Caco-2 (cell line): ENCODE measurements at regions of chr15 and their contacts with region 1.

Region 1: GRCh38 chr15:43133430-43134156 is at the start of gene TMEM62:
- DNase-seq: peak; percentile 87 to 89
- H3K4me3 ChIP-seq: peak within 1 kb of the TSS; percentile 73
- H3K4me3 Mint-ChIP-seq: peak within 1 kb of the TSS; percentile 94
- H3K27ac Mint-ChIP-seq: peak within 1 kb of the TSS; percentile 95
- H3K4me1 ChIP-seq: no peaks in the 10 kb centered on the region
- H3K4me1 Mint-ChIP-seq: peaks cover 16% of the 10 kb centered on the region
- H3K27me3 ChIP-seq: no peaks in the 10 kb centered on the region; the same call in 1 of the 2 replicates
- H3K27me3 Mint-ChIP-seq: no peaks in the 10 kb centered on the region
- CTCF ChIP-seq: peak in 1 of 2 experiments; percentile 2
- total RNA-seq, gene TMEM62: 22.0 and 23.7 TPM in 2 replicates

Region 2: DNA sequence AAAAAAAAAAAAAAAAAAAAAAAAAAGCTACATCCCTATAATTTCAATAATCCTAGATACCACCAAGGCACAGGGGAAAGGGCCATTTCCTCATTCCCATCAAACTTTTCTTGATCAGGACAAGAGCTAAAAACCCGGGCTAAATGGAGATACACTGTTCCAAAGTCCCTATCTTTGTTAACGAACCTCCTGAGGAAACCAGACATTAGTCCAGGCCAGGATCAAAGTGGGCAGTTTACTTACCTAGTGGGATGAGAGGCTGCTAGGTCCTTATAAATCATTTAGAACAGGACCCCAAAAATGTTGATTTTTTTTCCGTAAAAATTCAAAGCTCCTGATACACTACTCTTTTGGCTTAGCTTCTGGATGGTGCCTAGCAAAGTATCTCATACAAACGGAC is 63.3 kb before region 1 on chr15:
- CTCF ChIA-PET with region 1: no interaction called
- POLR2A ChIA-PET with region 1: interaction called, 11 read pairs
- intact Hi-C with region 1: no loop called
- DNase-seq: no peak
- H3K4me3 ChIP-seq: no peak overlapping the region
- H3K4me3 Mint-ChIP-seq: no peak overlapping the region
- H3K27ac Mint-ChIP-seq: no peak overlapping the region
- H3K4me1 ChIP-seq: 0 out of 2 replicates have a peak, but pooled peaks cover under 1% of the 10 kb centered on the region
- H3K4me1 Mint-ChIP-seq: peaks cover 9% of the 10 kb centered on the region
- H3K27me3 ChIP-seq: no peaks in the 10 kb centered on the region
- H3K27me3 Mint-ChIP-seq: no peaks in the 10 kb centered on the region
- CTCF ChIP-seq: no peak

Region 3: DNA sequence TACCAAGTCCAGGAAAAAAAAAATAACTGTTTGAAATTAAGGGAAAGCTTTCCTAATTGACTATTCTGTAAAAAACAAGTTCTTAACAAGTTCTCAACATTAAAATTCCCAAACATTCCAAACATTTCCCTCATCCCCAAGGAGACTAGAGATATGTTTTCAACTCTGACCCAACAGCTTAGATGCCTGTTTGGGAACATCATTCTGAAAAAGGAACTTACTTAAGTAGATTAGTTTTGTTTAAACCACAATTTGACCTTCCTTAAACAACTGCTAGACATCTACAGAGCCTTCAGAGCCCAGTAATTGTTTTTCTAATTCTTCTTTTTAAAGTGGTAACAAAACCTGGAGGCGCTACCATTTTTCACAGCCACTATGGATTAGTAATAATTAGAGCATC is 40.6 kb before region 1 on chr15:
- CTCF ChIA-PET with region 1: no interaction called
- POLR2A ChIA-PET with region 1: no interaction called
- intact Hi-C with region 1: no loop called
- DNase-seq: no peak
- H3K4me3 ChIP-seq: no peak overlapping the region
- H3K4me3 Mint-ChIP-seq: no peak overlapping the region
- H3K27ac Mint-ChIP-seq: no peak overlapping the region
- H3K4me1 ChIP-seq: peaks cover 21% of the 10 kb centered on the region
- H3K4me1 Mint-ChIP-seq: peaks cover 19% of the 10 kb centered on the region
- H3K27me3 ChIP-seq: no peaks in the 10 kb centered on the region
- H3K27me3 Mint-ChIP-seq: no peaks in the 10 kb centered on the region
- CTCF ChIP-seq: no peak

Region 4: DNA sequence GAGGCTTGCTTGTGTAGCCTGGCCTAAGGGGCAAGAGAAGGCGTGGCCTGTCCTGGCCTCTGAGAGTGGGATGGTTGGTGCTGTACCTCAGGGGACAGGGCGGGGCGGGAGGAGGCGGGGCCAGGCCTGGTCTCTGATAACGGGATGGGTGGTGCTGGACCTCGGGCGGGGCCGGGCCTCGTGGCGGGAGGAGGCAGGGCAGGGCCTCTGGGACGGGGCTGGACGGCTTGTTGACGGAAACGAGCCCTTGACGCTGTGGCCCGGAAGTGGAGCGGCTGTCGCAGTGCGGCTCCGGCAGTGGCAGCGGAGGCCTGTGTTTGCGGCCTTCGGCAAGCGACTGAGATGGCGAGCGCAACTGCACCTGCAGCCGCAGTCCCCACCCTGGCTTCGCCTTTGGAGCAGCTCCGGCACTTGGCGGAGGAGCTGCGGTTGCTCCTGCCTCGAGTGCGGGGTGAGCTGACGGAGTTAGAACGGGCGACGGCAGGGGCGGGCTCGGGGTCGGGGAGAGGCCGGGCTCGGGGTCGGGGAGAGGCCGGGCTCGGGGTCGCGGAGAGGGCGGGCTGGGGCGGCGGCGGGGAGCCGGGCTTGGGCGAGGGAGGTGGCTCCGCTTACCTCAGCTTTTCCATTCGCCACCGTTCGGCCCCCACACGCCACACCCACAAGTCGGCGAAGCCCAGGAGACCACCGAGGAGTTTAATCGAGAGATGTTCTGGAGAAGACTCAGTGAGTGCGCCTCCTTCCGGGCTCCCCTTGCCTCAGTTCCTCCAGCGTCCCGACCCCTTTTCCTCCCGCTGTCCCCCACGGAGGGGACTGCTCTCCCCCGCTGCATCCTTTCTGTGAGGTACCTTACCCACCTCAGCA is 51.8 kb after region 1 on chr15 and contains the start of gene CCNDBP1:
- CTCF ChIA-PET with region 1: no interaction called
- POLR2A ChIA-PET with region 1: no interaction called
- intact Hi-C with region 1: loop called (anchors 2 kb)
- DNase-seq: peak; percentile 96 to 97
- H3K4me3 ChIP-seq: peak within 1 kb of the TSS; percentile 82
- H3K4me3 Mint-ChIP-seq: peak within 1 kb of the TSS; percentile 93
- H3K27ac Mint-ChIP-seq: peak within 1 kb of the TSS; percentile 79
- H3K4me1 ChIP-seq: peaks cover 12% of the 10 kb centered on the region
- H3K4me1 Mint-ChIP-seq: peaks cover 4% of the 10 kb centered on the region
- H3K27me3 ChIP-seq: no peaks in the 10 kb centered on the region
- H3K27me3 Mint-ChIP-seq: no peaks in the 10 kb centered on the region
- CTCF ChIP-seq: peak; percentile 42 to 55
- total RNA-seq, gene CCNDBP1: 21.7 and 23.1 TPM in 2 replicates